Heart left ventricle (tissue), 16 donors: ENCODE measurements at regions of chr16 and their contacts with region 1.

Region 1: DNA sequence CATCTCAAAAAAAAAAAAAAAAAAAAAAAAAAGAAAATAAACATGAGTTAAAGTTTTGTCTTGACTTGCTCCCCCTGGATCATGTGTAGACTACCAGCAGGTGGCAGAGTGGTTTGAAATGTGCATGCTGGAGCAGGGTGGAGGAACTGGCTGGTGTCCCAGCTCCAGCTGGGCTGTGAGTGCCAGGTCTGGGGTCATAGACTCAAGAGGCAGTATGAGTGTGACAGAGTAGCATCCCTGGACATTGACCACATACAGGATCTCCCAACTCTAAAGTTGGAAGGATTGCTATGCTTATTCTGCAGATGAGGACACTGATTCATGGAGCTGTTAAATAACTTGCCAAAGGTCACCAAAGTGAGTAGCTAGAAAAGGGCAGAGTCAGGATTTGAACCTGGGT is 198.0 kb upstream of the MPHOSPH6 start:
- DNase-seq: peak in 4 of 5 donors; percentile 65 to 75 (median 68)
- ATAC-seq: peak; percentile 77 to 96 (median 93)
- H3K4me3 ChIP-seq: no peak overlapping the region
- H3K27ac ChIP-seq: no peak overlapping the region
- H3K4me1 ChIP-seq: no peaks in the 10 kb centered on the region
- H3K27me3 ChIP-seq: no peaks in the 10 kb centered on the region
- CTCF ChIP-seq: peak in 11 of 12 donors; percentile 12 to 52 (median 38)
- POLR2A ChIP-seq: no peak

Region 2: GRCh38 chr16:82456683-82457082 is 88.6 kb after region 1 on chr16:
- intact Hi-C with region 1: loop called in 2 of 10 experiments (anchors 5 to 10 kb)
- DNase-seq: peak in 3 of 5 donors; percentile 10 to 42 (median 37)
- ATAC-seq: peak in 3 of 4 donors; percentile 63 to 81 (median 80)
- H3K4me3 ChIP-seq: no peak overlapping the region
- H3K27ac ChIP-seq: no peak overlapping the region
- H3K4me1 ChIP-seq: no peaks in the 10 kb centered on the region
- H3K27me3 ChIP-seq: peaks cover 0 to 5% (median 0%) of the 10 kb centered on the region in 9 donors
- CTCF ChIP-seq: peak; percentile 44 to 78 (median 67)
- POLR2A ChIP-seq: no peak

Region 3: GRCh38 chr16:82567175-82567574 is 199.1 kb after region 1 on chr16:
- intact Hi-C with region 1: no loop called
- DNase-seq: peak in 4 of 5 donors; percentile 16 to 47 (median 36)
- ATAC-seq: peak; percentile 95 to 98 (median 96)
- H3K4me3 ChIP-seq: no peak overlapping the region
- H3K27ac ChIP-seq: peak overlapping the region in 10 of 12 donors; percentile 2 to 78 (median 38)
- H3K4me1 ChIP-seq: peaks cover 0 to 8% (median 0%) of the 10 kb centered on the region in 12 donors
- H3K27me3 ChIP-seq: no peaks in the 10 kb centered on the region
- CTCF ChIP-seq: no peak
- POLR2A ChIP-seq: no peak

Region 4: GRCh38 chr16:82580298-82580890 is 212.4 kb after region 1 on chr16:
- intact Hi-C with region 1: loop called in 8 of 10 experiments (anchors 2 to 10 kb)
- DNase-seq: peak in 1 of 5 donors; percentile 30
- ATAC-seq: peak; percentile 66 to 72 (median 69)
- H3K4me3 ChIP-seq: no peak overlapping the region
- H3K27ac ChIP-seq: no peak overlapping the region
- H3K4me1 ChIP-seq: peaks cover 0 to 11% (median 0%) of the 10 kb centered on the region in 12 donors
- H3K27me3 ChIP-seq: no peaks in the 10 kb centered on the region
- CTCF ChIP-seq: peak; percentile 9 to 59 (median 44)
- POLR2A ChIP-seq: no peak

Region 5: GRCh38 chr16:82598771-82599170 is 230.7 kb after region 1 on chr16:
- intact Hi-C with region 1: no loop called
- DNase-seq: no peak
- ATAC-seq: no peak
- H3K4me3 ChIP-seq: no peak overlapping the region
- H3K27ac ChIP-seq: no peak overlapping the region
- H3K4me1 ChIP-seq: peaks cover 0 to 2% (median 0%) of the 10 kb centered on the region in 12 donors
- H3K27me3 ChIP-seq: no peaks in the 10 kb centered on the region
- CTCF ChIP-seq: no peak
- POLR2A ChIP-seq: no peak